Testis (tissue), 5 donors: ENCODE measurements at regions of chr3 and their contacts with region 1.

Region 1: GRCh38 chr3:62188681-62189383 is 184.5 kb downstream of the FEZF2 start:
- DNase-seq: peak; percentile 90
- H3K4me3 ChIP-seq: no peak overlapping the region
- H3K27ac ChIP-seq: no peak overlapping the region
- H3K4me1 ChIP-seq: no peaks in the 10 kb centered on the region
- H3K27me3 ChIP-seq: no peaks in the 10 kb centered on the region
- CTCF ChIP-seq: peak; percentile 63 to 92 (median 84)
- POLR2A ChIP-seq: no peak

Region 2: GRCh38 chr3:61864886-61865285 is 323.9 kb before region 1 on chr3:
- intact Hi-C with region 1: loop called (anchors 5 kb)
- DNase-seq: no peak
- H3K4me3 ChIP-seq: no peak overlapping the region
- H3K27ac ChIP-seq: no peak overlapping the region
- H3K4me1 ChIP-seq: peaks cover 5% of the 10 kb centered on the region
- H3K27me3 ChIP-seq: no peaks in the 10 kb centered on the region
- CTCF ChIP-seq: no peak
- POLR2A ChIP-seq: no peak

Region 3: DNA sequence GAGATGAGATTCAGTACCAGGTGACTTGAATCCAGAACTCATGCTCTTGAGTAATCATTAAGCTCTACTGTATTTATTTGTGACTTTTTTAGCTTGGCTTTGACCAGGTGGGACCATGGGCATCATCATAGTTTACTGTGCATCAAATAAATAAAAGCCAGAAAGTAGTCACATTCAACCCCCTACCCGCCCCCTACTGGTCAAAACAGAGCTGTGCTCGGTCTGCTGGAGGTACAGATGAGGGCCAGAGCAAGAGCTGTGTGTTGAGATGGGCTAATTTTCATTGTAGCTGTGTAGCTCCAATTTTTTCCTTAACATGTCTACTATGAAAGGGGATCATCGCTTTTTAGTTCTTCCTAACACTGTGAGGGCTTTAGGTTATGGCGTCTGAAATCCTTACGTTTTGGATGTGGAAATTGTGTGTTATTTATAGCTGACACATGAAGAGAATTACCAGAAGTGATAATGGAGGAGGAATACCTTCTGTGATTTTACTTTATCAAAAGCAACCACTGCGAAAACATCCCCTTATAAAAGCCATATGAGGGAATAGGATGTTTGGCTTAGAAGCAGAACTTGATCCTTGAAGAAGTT is 252.4 kb before region 1 on chr3:
- intact Hi-C with region 1: no loop called
- DNase-seq: peak; percentile 54
- H3K4me3 ChIP-seq: no peak overlapping the region
- H3K27ac ChIP-seq: no peak overlapping the region
- H3K4me1 ChIP-seq: no peaks in the 10 kb centered on the region
- H3K27me3 ChIP-seq: no peaks in the 10 kb centered on the region
- CTCF ChIP-seq: peak in 2 of 3 experiments; percentile 41 to 47
- POLR2A ChIP-seq: no peak

Region 4: GRCh38 chr3:62090066-62090465 is 98.8 kb before region 1 on chr3:
- intact Hi-C with region 1: no loop called
- DNase-seq: no peak
- H3K4me3 ChIP-seq: no peak overlapping the region
- H3K27ac ChIP-seq: no peak overlapping the region
- H3K4me1 ChIP-seq: peaks cover 8% of the 10 kb centered on the region
- H3K27me3 ChIP-seq: no peaks in the 10 kb centered on the region
- CTCF ChIP-seq: no peak
- POLR2A ChIP-seq: no peak